PC-3 (cell line): ENCODE measurements at regions of chr12 and their contacts with region 1.

Region 1: DNA sequence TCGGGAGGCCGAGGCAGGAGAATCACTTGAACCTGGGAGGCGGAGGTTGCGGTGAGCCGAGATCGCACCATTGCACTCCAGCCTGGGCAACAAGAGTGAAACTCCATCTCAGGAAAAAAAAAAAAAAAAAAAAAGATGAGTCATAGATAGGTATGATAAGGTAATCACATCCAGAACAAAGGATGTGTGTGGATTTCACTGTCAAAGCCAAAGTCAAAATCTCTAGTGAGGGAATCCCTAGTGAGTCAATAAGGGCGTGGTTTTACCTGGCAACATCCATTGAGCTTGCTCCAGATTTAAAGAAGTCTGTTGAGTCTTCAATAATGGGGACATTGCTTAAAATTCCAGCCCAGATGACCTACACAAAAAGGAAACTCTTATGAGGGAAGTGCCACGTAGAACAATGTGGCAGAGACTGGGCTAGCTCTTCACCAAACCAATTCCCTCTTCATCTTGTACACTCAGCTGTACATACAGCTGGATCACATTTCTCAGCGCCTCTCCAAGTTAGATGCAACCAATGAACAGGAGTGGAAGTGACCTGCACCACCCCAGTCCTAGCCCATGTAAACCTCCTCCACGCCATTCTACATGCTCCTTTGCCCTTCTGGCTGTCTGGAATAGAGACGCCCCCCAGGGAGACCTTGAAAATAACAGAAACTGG is 23.4 kb downstream of the ALDH1L2 start:
- DNase-seq: peak; percentile 70
- ATAC-seq: peak; percentile 49
- H3K4me3 ChIP-seq: no peak overlapping the region
- H3K27ac ChIP-seq: no peak overlapping the region
- H3K4me1 ChIP-seq: 0 out of 2 replicates have a peak, but pooled peaks cover 6% of the 10 kb centered on the region
- H3K27me3 ChIP-seq: no peaks in the 10 kb centered on the region
- CTCF ChIP-seq: no peak

Region 2: GRCh38 chr12:104865080-104865479 is 195.8 kb before region 1 on chr12:
- CTCF ChIA-PET with region 1: no interaction called
- POLR2A ChIA-PET with region 1: interaction called, 35 read pairs
- intact Hi-C with region 1: no loop called
- DNase-seq: no peak
- ATAC-seq: no peak
- H3K4me3 ChIP-seq: no peak overlapping the region
- H3K27ac ChIP-seq: no peak overlapping the region
- H3K4me1 ChIP-seq: peaks cover 16% of the 10 kb centered on the region
- H3K27me3 ChIP-seq: no peaks in the 10 kb centered on the region
- CTCF ChIP-seq: no peak

Region 3: GRCh38 chr12:105455260-105455659 is 394.4 kb after region 1 on chr12:
- CTCF ChIA-PET with region 1: no interaction called
- POLR2A ChIA-PET with region 1: no interaction called
- intact Hi-C with region 1: no loop called
- DNase-seq: peak; percentile 94
- ATAC-seq: peak; percentile 94
- H3K4me3 ChIP-seq: no peak overlapping the region
- H3K27ac ChIP-seq: peak overlapping the region; percentile 29; the same call in 1 of the 2 replicates
- H3K4me1 ChIP-seq: peaks cover 11% of the 10 kb centered on the region
- H3K27me3 ChIP-seq: no peaks in the 10 kb centered on the region
- CTCF ChIP-seq: peak; percentile 80